ENCODE measurements at regions of chr7 and their contacts with region 1.

Region 1: DNA sequence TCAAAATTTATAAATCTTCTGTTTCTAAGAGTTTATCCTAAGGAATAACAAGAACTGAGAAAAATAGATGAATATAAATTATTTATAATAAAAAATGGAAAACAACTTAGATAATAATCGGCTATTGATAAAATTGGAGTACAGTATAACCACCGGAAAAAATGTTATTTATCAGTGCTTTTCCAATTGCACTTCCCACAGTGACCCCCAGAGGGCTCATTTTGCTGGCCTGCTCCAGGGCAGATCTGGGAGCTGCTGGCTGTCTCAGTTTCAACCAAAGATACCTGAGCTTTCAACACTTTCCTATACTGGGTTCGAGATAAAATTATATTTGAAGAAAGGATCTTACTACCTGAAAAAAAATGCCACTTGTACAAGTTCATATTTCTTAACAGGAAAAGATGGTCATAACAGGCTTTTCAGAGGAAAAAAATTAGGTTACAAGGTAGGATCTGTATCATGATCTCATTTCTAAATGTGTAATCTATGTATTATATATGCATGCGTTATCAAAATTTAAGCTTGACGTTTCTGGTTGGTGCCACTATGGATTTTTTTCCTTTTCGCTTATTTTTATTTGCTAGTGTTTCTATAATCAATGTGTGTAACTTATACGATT is 165.7 kb downstream of the NPSR1 start:
- DNase-seq: peak; percentile 58 to 66
- H3K4me3 ChIP-seq: no peak overlapping the region
- H3K27ac ChIP-seq: no peak overlapping the region
- H3K4me1 ChIP-seq: peaks cover 14% of the 10 kb centered on the region
- H3K27me3 ChIP-seq: no peaks in the 10 kb centered on the region
- CTCF ChIP-seq: peak; percentile 99

Region 2: GRCh38 chr7:34759452-34760125 is 64.2 kb before region 1 on chr7:
- CTCF ChIA-PET with region 1: no interaction called
- POLR2A ChIA-PET with region 1: no interaction called
- intact Hi-C with region 1: loop called (anchors 5 kb)
- DNase-seq: no peak
- H3K4me3 ChIP-seq: no peak overlapping the region
- H3K27ac ChIP-seq: no peak overlapping the region
- H3K4me1 ChIP-seq: peaks cover 51% of the 10 kb centered on the region
- H3K27me3 ChIP-seq: no peaks in the 10 kb centered on the region
- CTCF ChIP-seq: peak; percentile 79

Region 3: GRCh38 chr7:34928049-34928448 is 104.3 kb after region 1 on chr7:
- CTCF ChIA-PET with region 1: interaction called, 5 read pairs
- POLR2A ChIA-PET with region 1: no interaction called
- intact Hi-C with region 1: loop called (anchors 5 kb)
- DNase-seq: peak in 1 of 2 experiments; percentile 29
- H3K4me3 ChIP-seq: no peak overlapping the region
- H3K27ac ChIP-seq: no peak overlapping the region
- H3K4me1 ChIP-seq: no peaks in the 10 kb centered on the region
- H3K27me3 ChIP-seq: no peaks in the 10 kb centered on the region
- CTCF ChIP-seq: peak; percentile 71

Region 4: DNA sequence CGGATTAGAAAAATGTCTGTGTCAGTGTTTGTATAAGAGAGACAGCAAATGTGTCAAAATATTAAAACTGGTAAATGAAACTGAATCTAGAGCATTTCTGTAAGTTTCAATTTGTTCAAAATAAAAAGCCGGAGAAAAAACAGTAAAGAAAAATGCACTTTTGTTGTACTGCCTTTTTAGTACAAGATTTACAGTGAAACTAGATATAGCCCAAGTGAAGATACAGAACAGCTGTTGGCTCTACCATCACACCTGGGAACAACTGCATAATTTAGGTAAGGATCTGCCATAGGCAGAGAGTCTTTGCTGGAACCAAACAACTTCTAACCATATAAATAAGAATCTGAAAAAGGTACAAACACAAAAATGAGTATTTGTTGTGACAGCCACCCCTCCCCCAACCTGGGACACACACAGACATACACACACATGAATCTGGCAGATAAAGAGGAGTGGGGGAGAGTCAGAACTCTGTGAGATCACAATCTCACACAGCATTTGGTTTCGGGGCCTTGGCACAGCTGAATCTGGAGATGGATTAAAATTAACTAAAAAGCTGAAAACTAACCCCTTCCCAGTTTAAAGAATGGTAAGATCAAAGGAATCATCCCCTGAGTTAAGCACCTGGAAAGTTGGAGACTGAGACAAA is 158.7 kb after region 1 on chr7:
- CTCF ChIA-PET with region 1: no interaction called
- POLR2A ChIA-PET with region 1: no interaction called
- intact Hi-C with region 1: no loop called
- DNase-seq: no peak
- H3K4me3 ChIP-seq: no peak overlapping the region
- H3K27ac ChIP-seq: no peak overlapping the region
- H3K4me1 ChIP-seq: no peaks in the 10 kb centered on the region
- H3K27me3 ChIP-seq: no peaks in the 10 kb centered on the region
- CTCF ChIP-seq: no peak

Region 5: GRCh38 chr7:35624299-35625186 is 800.8 kb after region 1 on chr7:
- CTCF ChIA-PET with region 1: no interaction called
- POLR2A ChIA-PET with region 1: no interaction called
- intact Hi-C with region 1: loop called (anchors 10 kb)
- DNase-seq: peak in 1 of 2 experiments; percentile 32
- H3K4me3 ChIP-seq: no peak overlapping the region
- H3K27ac ChIP-seq: no peak overlapping the region
- H3K4me1 ChIP-seq: no peaks in the 10 kb centered on the region
- H3K27me3 ChIP-seq: no peaks in the 10 kb centered on the region
- CTCF ChIP-seq: peak; percentile 93